ENCODE measurements at regions of chr19 and their contacts with region 1.

Region 1: GRCh38 chr19:7829561-7830271 is at the start of gene EVI5L:
- DNase-seq: peak; percentile 99
- ATAC-seq: peak; percentile 81 to 92 (median 82)
- H3K4me3 ChIP-seq: peak within 1 kb of the TSS; percentile 38
- H3K4me3 Mint-ChIP-seq: peak within 1 kb of the TSS; percentile 84
- H3K27ac ChIP-seq: peak within 1 kb of the TSS; percentile 35
- H3K27ac Mint-ChIP-seq: peak within 1 kb of the TSS; percentile 80 to 90
- H3K4me1 ChIP-seq: peaks cover 23% of the 10 kb centered on the region
- H3K4me1 Mint-ChIP-seq: peaks cover 15 to 36% of the 10 kb centered on the region in 2 donors
- H3K27me3 ChIP-seq: no peaks in the 10 kb centered on the region
- H3K27me3 Mint-ChIP-seq: no peaks in the 10 kb centered on the region
- CTCF ChIP-seq: no peak
- total RNA-seq, gene EVI5L: 9.6 to 13.5 (median 11.3) TPM

Region 2: GRCh38 chr19:7806876-7807275 is 22.8 kb before region 1 on chr19:
- intact Hi-C with region 1: loop called (anchors 1 kb)
- DNase-seq: no peak
- ATAC-seq: no peak
- H3K4me3 ChIP-seq: no peak overlapping the region
- H3K4me3 Mint-ChIP-seq: no peak overlapping the region
- H3K27ac ChIP-seq: no peak overlapping the region
- H3K27ac Mint-ChIP-seq: no peak overlapping the region
- H3K4me1 ChIP-seq: peaks cover 19% of the 10 kb centered on the region
- H3K4me1 Mint-ChIP-seq: peaks cover 11 to 14% of the 10 kb centered on the region in 2 donors
- H3K27me3 ChIP-seq: no peaks in the 10 kb centered on the region
- H3K27me3 Mint-ChIP-seq: peaks cover 6 to 14% of the 10 kb centered on the region in 2 donors
- CTCF ChIP-seq: no peak

Measured in natural killer cell (primary cell).